CD8-positive, alpha-beta memory T cell (primary cell): ENCODE measurements at regions of chr12 and their contacts with region 1.

Region 1: GRCh38 chr12:54279866-54280467 is at the start of gene CBX5:
- DNase-seq: peak; percentile 99 to 100 (median 100)
- H3K4me3 ChIP-seq: peak within 1 kb of the TSS; percentile 92
- H3K4me3 Mint-ChIP-seq: no peak within 1 kb of the TSS
- H3K27ac ChIP-seq: peak within 1 kb of the TSS; percentile 92
- H3K27ac Mint-ChIP-seq: no peak within 1 kb of the TSS
- H3K4me1 ChIP-seq: peaks cover 60% of the 10 kb centered on the region
- H3K4me1 Mint-ChIP-seq: peaks cover 17 to 46% (median 18%) of the 10 kb centered on the region in 3 donors
- H3K27me3 ChIP-seq: no peaks in the 10 kb centered on the region
- H3K27me3 Mint-ChIP-seq: no peaks in the 10 kb centered on the region
- total RNA-seq, gene CBX5: 82.0 to 87.8 TPM

Region 2: DNA sequence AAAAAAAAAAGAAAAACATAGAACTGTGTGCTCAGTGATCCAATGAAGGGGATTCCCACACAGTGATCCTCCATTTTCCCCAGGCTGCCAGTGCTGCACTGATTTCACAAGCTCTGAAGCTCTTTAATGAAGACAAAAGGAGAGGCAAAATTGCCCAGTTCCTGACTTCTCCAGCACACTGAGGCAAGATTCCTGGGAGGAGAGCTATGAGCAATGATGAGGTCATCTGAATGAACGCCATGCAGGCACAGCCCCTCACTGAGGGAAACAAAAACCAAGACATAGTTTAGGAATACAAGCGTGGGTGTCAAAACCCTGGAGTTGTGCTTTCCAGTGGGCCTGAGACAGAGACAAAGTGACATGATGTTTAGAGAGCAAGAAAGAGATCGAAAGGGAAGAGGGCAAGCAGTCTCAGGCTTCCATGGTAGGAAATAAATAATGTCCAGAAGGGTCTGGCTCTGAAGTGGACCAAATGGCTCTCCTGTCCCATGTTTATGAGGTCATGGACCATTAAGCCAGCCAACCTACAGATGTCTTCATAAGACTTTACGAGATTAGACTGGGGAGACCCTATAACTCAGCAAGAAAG is 50.2 kb before region 1 on chr12:
- CTCF ChIA-PET with region 1: no interaction called
- POLR2A ChIA-PET with region 1: no interaction called
- DNase-seq: no peak
- H3K4me3 ChIP-seq: no peak overlapping the region
- H3K4me3 Mint-ChIP-seq: no peak overlapping the region
- H3K27ac ChIP-seq: no peak overlapping the region
- H3K27ac Mint-ChIP-seq: no peak overlapping the region
- H3K4me1 ChIP-seq: no peaks in the 10 kb centered on the region
- H3K4me1 Mint-ChIP-seq: no peaks in the 10 kb centered on the region
- H3K27me3 ChIP-seq: no peaks in the 10 kb centered on the region
- H3K27me3 Mint-ChIP-seq: no peaks in the 10 kb centered on the region

Region 3: DNA sequence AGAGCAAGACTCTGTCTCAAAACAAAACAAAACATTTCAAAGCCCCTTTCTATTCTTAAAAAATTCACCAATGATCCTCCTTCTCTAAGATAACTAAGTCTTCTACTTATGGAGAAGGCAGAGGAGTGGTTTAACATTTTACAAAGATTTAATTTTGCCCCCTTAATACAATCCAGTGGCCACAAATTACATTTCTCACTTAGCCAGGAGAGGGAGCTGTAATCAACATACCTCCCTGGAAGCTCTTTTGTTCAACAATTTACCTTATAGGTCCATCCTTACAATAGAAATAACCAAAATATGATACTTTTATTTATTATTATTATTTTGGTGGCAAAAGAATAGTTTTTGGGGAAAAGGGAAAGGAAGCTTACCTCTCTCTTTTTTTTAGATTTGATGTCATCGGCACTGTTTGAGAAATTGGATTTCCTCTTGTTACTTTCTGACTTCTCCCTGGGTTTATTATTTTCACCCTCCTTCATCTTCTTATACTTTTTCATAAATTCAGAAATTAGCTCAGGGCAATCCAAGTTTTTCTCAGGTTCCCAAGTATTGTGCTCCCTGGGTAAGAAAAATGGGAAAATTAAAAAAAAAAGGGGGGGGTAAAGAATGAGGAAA is 28.2 kb before region 1 on chr12:
- CTCF ChIA-PET with region 1: interaction called, 12 read pairs
- POLR2A ChIA-PET with region 1: interaction called, 3 read pairs
- DNase-seq: peak in 2 of 5 donors; percentile 32 to 45
- H3K4me3 ChIP-seq: no peak overlapping the region
- H3K4me3 Mint-ChIP-seq: no peak overlapping the region
- H3K27ac ChIP-seq: no peak overlapping the region
- H3K27ac Mint-ChIP-seq: peak overlapping the region in 1 of 8 donors; percentile 26
- H3K4me1 ChIP-seq: no peaks in the 10 kb centered on the region
- H3K4me1 Mint-ChIP-seq: peaks cover 3 to 9% (median 7%) of the 10 kb centered on the region in 3 donors
- H3K27me3 ChIP-seq: no peaks in the 10 kb centered on the region
- H3K27me3 Mint-ChIP-seq: no peaks in the 10 kb centered on the region

Region 4: DNA sequence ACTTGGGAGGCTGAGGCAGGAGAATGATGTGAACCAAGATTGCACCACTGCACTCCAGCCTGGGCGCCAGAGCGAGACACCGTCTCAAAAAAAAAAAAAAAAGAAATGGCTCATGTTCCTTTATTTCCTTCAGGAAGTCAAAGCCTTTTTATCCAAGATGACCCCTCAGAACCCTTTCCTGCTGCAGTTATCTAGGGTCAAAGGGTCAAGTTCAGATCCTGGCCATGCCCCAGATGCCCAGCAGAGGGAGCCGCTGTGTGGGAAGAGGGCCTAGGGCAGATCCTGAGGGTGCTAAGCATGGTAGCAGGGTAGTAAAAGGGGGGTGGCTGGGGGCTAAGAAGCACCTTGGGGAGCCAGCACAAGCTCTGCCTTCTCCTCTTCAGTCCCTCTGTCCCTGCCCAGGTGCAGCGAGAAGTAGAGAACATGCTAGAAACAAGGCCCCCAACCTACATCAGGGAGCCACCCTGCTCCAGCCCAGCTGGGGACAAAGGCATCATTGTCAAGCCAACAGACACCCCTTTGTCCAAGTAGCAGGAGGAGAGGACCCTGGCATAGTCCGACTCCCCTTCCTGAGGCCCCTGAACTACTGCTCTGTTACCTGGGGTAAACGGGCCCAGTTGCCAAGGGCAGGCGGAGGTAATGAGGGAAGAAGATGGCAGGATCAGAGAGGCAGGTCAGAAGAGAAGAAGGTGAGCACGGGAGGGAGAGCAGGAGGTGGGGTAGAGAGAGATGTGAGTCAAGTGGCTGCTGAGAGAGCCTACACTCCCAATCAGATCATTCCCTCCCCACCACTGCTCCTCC is 14.4 kb after region 1 on chr12:
- CTCF ChIA-PET with region 1: interaction called, 9 read pairs
- POLR2A ChIA-PET with region 1: interaction called, 12 read pairs
- DNase-seq: peak; percentile 32 to 68 (median 40)
- H3K4me3 ChIP-seq: no peak overlapping the region
- H3K4me3 Mint-ChIP-seq: no peak overlapping the region
- H3K27ac ChIP-seq: peak overlapping the region; percentile 80
- H3K27ac Mint-ChIP-seq: peak overlapping the region in 2 of 8 donors; percentile 47 to 74
- H3K4me1 ChIP-seq: peaks cover 3% of the 10 kb centered on the region
- H3K4me1 Mint-ChIP-seq: peaks cover 4 to 6% (median 6%) of the 10 kb centered on the region in 3 donors
- H3K27me3 ChIP-seq: no peaks in the 10 kb centered on the region
- H3K27me3 Mint-ChIP-seq: peaks cover 2 to 12% of the 10 kb centered on the region in 2 donors

Region 5: DNA sequence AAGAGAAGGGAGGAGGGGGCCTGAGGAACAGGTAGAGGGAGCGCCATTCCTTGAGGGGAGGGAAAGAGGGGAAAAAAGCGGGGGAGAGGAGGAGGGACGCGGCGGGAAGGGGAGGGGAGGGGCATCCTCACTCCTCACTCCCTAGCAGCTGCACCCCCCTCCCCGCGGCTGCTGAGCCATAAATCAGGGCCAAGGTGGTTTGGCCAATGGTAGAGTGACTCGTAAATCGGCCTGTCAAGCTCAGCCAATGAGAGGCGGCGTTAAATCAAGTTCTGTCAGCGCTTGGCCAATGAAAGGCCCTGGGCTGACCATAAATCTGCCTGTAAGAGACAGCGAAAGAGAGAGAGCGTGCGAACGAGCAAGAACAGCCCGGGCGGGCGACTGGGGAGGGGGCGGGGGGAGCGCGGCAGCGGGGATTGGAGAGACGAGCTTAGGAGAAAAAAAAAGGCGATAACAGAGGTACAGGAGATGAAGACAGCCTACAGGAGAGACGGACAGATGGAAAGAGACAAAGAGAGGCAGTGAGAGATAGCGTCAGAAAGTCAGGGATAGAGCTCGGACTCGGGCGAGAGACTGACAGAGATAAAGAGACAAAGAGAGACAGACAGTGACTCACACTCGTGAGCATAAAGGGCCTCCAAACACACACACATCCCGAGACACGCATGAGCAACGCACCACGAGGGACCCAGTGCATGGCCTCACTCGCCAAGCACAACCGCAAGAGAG is 79.2 kb after region 1 on chr12:
- CTCF ChIA-PET with region 1: interaction called, 6 read pairs
- POLR2A ChIA-PET with region 1: interaction called, 29 read pairs
- DNase-seq: peak; percentile 89 to 97 (median 94)
- H3K4me3 ChIP-seq: peak overlapping the region; percentile 80
- H3K4me3 Mint-ChIP-seq: no peak overlapping the region
- H3K27ac ChIP-seq: peak overlapping the region; percentile 71
- H3K27ac Mint-ChIP-seq: no peak overlapping the region
- H3K4me1 ChIP-seq: peaks cover 23% of the 10 kb centered on the region
- H3K4me1 Mint-ChIP-seq: peaks cover 8 to 13% (median 11%) of the 10 kb centered on the region in 3 donors
- H3K27me3 ChIP-seq: no peaks in the 10 kb centered on the region
- H3K27me3 Mint-ChIP-seq: peaks cover 0 to 2% of the 10 kb centered on the region in 2 donors

Region 6: GRCh38 chr12:54622459-54623183 is 342.7 kb after region 1 on chr12:
- CTCF ChIA-PET with region 1: no interaction called
- POLR2A ChIA-PET with region 1: no interaction called
- DNase-seq: no peak
- H3K4me3 ChIP-seq: no peak overlapping the region
- H3K4me3 Mint-ChIP-seq: no peak overlapping the region
- H3K27ac ChIP-seq: no peak overlapping the region
- H3K27ac Mint-ChIP-seq: no peak overlapping the region
- H3K4me1 ChIP-seq: no peaks in the 10 kb centered on the region
- H3K4me1 Mint-ChIP-seq: no peaks in the 10 kb centered on the region
- H3K27me3 ChIP-seq: peaks cover 6% of the 10 kb centered on the region
- H3K27me3 Mint-ChIP-seq: peaks cover 26 to 62% of the 10 kb centered on the region in 2 donors